Heart right ventricle (tissue), 16 donors: ENCODE measurements at regions of chr7 and their contacts with region 1.

Region 1: DNA sequence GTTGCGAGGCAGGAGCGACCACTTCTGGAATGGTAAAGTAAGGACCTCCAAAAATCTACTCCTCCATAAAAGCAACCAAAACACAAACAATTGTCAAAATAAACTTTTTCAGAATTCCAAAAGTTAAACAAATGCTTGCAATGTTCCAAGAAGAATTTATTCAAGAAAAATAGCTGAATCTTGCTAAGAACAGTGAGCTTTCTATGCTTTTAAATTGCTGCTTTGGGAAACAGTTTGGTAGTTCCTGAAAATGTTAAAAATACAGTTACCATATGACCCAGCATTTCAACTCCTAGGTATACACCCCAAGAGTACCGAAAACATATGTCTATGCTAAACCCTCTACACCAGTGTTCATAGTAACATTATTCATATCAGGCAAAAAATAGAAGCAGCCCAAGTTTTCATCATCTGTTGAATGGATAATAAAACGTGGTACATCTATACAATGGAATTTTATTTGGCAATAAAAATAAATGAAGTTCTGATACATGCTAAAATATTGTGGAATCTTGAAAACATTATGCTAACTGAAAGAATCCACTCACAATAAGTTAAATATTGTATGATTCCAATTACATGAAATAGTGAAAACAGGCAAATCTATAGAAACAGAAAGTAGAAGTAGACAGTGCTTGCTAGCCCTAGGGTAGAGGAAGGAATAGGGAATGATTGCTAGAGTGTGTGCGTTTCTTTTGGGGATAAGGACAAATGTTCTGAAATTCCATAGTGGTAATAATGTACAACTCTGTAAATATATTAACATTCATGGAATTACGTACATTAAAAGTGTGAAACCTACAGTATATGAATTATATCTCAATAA is 57.0 kb downstream of the LRRN3 start:
- DNase-seq: no peak
- ATAC-seq: no peak
- H3K4me3 ChIP-seq: no peak overlapping the region
- H3K27ac ChIP-seq: no peak overlapping the region
- H3K4me1 ChIP-seq: peaks cover 0 to 5% (median 0%) of the 10 kb centered on the region in 9 donors
- H3K27me3 ChIP-seq: no peaks in the 10 kb centered on the region
- CTCF ChIP-seq: no peak

Region 2: GRCh38 chr7:111678281-111678680 is 530.4 kb after region 1 on chr7:
- intact Hi-C with region 1: no loop called
- DNase-seq: no peak
- ATAC-seq: no peak
- H3K4me3 ChIP-seq: no peak overlapping the region
- H3K27ac ChIP-seq: no peak overlapping the region
- H3K4me1 ChIP-seq: no peaks in the 10 kb centered on the region
- H3K27me3 ChIP-seq: peaks cover 0 to 10% (median 0%) of the 10 kb centered on the region in 7 donors
- CTCF ChIP-seq: no peak

Region 3: DNA sequence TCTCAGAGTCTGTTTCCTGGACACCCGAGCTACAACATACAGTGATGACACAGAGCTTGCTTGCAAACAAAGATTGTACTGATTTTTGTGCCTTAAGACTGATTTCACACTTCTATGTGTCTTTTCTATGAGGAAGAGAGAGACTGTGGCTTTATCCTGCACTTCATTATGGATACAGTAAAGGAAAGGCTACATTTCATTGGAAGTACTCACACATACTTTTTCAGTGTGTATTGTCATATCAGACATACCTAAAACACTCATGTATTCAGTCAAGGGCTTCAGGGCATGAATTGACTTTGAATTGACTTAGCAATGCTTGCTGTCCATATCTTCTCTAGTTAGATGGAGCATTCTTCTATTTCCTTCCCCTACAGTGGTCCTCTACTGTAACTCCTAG is 549.9 kb after region 1 on chr7:
- intact Hi-C with region 1: no loop called
- DNase-seq: no peak
- ATAC-seq: no peak
- H3K4me3 ChIP-seq: no peak overlapping the region
- H3K27ac ChIP-seq: no peak overlapping the region
- H3K4me1 ChIP-seq: no peaks in the 10 kb centered on the region
- H3K27me3 ChIP-seq: no peaks in the 10 kb centered on the region
- CTCF ChIP-seq: no peak

Region 4: DNA sequence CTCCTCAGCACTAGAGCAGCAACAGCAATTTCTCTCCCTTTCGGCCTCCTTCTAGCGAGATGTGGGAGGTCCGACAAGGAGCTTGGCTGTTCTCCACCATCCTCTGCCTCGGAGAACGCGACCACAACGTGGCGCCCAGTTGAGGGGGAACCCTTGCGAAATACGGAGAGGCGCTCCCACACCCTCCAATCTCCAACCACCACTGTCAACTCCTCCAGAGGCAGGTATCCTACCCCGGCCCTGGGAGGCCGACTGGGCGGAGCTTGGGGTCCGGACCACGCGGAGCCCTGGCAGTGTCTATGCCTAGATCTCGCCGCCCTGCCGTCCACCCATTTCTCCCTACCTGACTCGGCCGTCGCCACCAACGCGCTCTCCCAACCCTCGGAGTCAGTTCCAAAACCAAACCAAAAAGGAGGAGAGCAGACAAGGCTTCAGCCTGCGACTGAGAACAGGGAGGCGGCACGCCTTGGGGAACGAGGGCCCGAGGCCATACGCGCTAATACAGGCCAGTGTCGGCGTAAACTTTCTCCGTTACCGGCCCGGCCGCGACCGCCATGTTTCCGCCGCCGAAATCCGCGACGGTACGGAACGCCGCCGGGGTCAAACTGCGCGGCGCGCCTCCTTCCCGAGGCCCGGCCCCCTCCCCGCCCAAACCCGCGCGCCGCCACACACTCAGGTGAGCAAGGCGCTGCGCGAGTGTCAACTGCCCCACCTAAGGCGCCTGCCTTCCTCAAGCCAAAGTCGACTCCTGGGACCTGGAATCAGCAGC is 1642.1 kb after region 1 on chr7 and contains the start of gene TMEM168:
- intact Hi-C with region 1: loop called in 1 of 10 experiments (anchors 10 kb)
- DNase-seq: peak; percentile 84 to 85
- ATAC-seq: peak; percentile 91 to 96 (median 94)
- H3K4me3 ChIP-seq: peak within 1 kb of the TSS; percentile 64 to 99 (median 82)
- H3K27ac ChIP-seq: peak within 1 kb of the TSS; percentile 86 to 97 (median 91)
- H3K4me1 ChIP-seq: peaks cover 0 to 23% (median 18%) of the 10 kb centered on the region in 9 donors
- H3K27me3 ChIP-seq: no peaks in the 10 kb centered on the region
- CTCF ChIP-seq: peak in 2 of 9 donors; percentile 26
- total RNA-seq, gene TMEM168: 15.2 to 23.7 (median 18.3) TPM